Activated CD8-positive, alpha-beta T cell treated with anti-CD3 and anti-CD28 coated beads for 36 hours (primary cell): ENCODE measurements at regions of chr2 and their contacts with region 1.

Region 1: DNA sequence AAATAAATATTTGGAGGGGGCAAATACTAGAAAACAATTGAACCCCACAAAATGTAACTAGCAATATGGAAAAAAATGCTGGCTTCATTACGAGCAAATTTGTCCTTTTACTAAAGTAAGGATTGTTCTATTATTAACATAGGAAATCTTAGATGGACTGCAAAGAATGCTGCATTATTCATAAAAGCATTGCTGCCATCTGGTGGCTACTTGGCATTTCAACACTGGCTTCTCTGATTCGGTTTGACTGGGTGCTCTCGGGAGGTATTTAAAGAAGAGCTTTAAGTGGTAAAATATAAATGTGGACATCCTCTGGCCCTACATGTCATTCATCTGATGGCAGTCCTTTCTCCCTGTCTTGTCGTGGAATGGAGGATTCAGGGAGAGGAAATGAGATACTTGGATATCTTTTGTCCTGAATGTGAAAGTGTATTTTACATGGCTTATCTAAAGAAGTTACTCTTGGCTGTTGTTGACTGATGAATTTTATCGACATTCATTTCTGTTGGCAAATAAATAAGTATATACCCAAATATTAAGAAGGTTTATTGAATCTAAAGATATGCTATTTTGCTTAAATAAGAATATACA is 130.2 kb downstream of the ARHGAP15 start:
- DNase-seq: peak; percentile 87
- ATAC-seq: no peak
- H3K4me3 Mint-ChIP-seq: peak overlapping the region; percentile 61
- H3K27ac Mint-ChIP-seq: peak overlapping the region; percentile 94
- H3K4me1 Mint-ChIP-seq: peaks cover 72% of the 10 kb centered on the region
- H3K27me3 Mint-ChIP-seq: no peaks in the 10 kb centered on the region
- CTCF ChIP-seq: peak; percentile 88

Region 2: DNA sequence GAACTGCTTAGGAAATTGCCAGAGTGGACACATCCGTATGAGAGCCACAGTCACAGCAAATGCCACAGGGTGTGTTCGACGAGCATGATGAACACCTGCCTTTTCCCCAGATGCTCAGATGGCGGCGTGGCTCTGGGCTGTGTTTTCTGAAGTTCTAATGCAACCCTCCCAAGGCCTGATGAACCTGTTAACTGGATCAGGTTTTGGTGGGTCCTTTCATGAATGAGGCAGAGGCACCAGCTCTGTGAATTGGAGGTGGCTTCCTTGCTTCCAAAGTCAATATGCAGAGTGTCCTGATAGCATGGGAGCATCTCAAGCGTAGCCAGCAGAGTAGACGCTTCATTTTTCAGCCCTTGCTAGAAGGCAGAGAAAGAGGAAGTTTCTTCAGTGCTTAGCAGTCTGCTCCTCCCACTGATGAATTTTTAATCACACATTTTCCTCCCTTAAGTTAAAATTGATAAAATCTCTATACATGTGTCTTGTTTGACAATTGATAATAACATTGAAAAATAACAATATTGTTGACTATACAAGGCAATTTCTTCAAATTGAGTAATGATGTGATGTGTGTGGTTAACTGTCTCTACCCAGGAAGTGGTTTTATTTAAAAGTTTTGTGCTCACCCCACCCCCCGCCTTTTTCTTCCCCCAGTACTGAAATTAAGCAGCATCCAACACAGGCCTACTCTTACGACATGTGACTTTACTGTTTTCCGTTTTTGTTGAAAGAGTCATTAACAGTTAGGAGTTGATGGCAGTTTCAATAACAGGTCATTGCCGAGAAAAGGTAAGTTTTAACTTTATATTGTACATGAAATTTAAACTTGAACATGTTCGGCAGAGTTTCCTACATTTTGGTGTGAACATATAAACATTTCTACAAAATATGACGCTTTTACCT is 130.5 kb before region 1 on chr2 and contains the start of gene ARHGAP15:
- CTCF ChIA-PET with region 1: interaction called, 39 read pairs
- POLR2A ChIA-PET with region 1: interaction called, 7 read pairs
- intact Hi-C with region 1: loop called (anchors 5 kb)
- DNase-seq: peak; percentile 91
- ATAC-seq: peak; percentile 77
- H3K4me3 Mint-ChIP-seq: peak within 1 kb of the TSS; percentile 81
- H3K27ac Mint-ChIP-seq: peak within 1 kb of the TSS; percentile 100
- H3K4me1 Mint-ChIP-seq: peaks cover 39% of the 10 kb centered on the region
- H3K27me3 Mint-ChIP-seq: no peaks in the 10 kb centered on the region
- CTCF ChIP-seq: no peak
- total RNA-seq, gene ARHGAP15: 71.3 to 72.8 TPM

Region 3: GRCh38 chr2:143171532-143172216 is 87.8 kb before region 1 on chr2:
- CTCF ChIA-PET with region 1: interaction called, 46 read pairs
- POLR2A ChIA-PET with region 1: no interaction called
- intact Hi-C with region 1: no loop called
- DNase-seq: no peak
- ATAC-seq: no peak
- H3K4me3 Mint-ChIP-seq: no peak overlapping the region
- H3K27ac Mint-ChIP-seq: peak overlapping the region; percentile 16
- H3K4me1 Mint-ChIP-seq: peaks cover 67% of the 10 kb centered on the region
- H3K27me3 Mint-ChIP-seq: no peaks in the 10 kb centered on the region
- CTCF ChIP-seq: no peak

Region 4: GRCh38 chr2:143223556-143223955 is 35.9 kb before region 1 on chr2:
- CTCF ChIA-PET with region 1: interaction called, 26 read pairs
- POLR2A ChIA-PET with region 1: interaction called, 3 read pairs
- intact Hi-C with region 1: loop called (anchors 5 kb)
- DNase-seq: no peak
- ATAC-seq: no peak
- H3K4me3 Mint-ChIP-seq: no peak overlapping the region
- H3K27ac Mint-ChIP-seq: peak overlapping the region; percentile 59
- H3K4me1 Mint-ChIP-seq: peaks cover 51% of the 10 kb centered on the region
- H3K27me3 Mint-ChIP-seq: no peaks in the 10 kb centered on the region
- CTCF ChIP-seq: no peak

Region 5: GRCh38 chr2:143246815-143247744 is 12.4 kb before region 1 on chr2:
- CTCF ChIA-PET with region 1: interaction called, 15 read pairs
- POLR2A ChIA-PET with region 1: interaction called, 4 read pairs
- intact Hi-C with region 1: no loop called
- DNase-seq: peak; percentile 50
- ATAC-seq: peak; percentile 64
- H3K4me3 Mint-ChIP-seq: peak overlapping the region; percentile 47
- H3K27ac Mint-ChIP-seq: no peak overlapping the region
- H3K4me1 Mint-ChIP-seq: peaks cover 24% of the 10 kb centered on the region
- H3K27me3 Mint-ChIP-seq: no peaks in the 10 kb centered on the region
- CTCF ChIP-seq: no peak